Adrenal gland (tissue), 19 donors: ENCODE measurements at regions of chr1 and their contacts with region 1.

Region 1: DNA sequence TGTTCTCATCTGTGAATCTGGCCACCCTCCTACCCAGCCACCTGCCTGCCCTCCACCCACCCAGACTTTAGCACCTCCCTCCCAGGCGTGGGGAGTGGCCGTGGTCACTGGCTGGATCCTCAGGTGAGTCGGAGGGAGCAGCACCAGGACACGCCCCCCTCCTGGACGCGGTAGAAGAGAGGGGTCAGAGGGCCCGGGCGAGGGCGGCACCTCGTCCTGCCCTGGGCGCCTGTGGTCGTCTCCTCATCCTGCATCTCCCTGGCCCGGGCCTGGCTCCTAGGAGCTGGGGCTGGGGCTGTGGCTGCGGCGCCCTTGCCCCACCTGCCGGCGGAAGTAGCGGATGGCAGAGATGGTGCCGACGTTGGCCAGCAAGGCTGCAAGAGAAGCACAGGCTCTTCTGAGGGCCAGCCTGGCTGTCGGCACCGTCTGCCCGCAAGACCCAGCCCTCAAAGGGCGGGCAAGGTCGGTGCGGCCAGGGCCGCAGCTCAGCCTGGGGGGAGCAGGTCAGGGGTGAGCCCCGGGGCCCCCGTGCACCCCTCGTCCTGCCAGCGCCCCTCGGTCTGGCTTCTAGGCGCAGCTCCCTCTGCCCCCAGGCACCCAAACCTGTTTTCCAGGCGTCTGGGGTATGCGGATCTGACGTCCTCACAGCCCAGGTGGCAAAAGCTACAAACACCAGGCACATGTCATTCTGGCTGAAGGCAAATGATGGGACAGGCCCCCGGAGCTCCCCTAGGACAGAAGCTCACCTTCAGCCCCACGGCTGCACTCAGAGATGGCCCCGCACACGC is 5.8 kb downstream of the PERM1 start:
- DNase-seq: peak in 5 of 7 donors; percentile 43 to 82 (median 65)
- H3K4me3 ChIP-seq: no peak overlapping the region
- H3K27ac ChIP-seq: no peak overlapping the region
- H3K4me1 ChIP-seq: no peaks in the 10 kb centered on the region
- H3K27me3 ChIP-seq: peaks cover 51% of the 10 kb centered on the region
- CTCF ChIP-seq: peak; percentile 23 to 72 (median 49)
- POLR2A ChIP-seq: no peak

Region 2: GRCh38 chr1:890661-891060 is 85.4 kb before region 1 on chr1:
- intact Hi-C with region 1: no loop called
- DNase-seq: no peak
- H3K4me3 ChIP-seq: no peak overlapping the region
- H3K27ac ChIP-seq: no peak overlapping the region
- H3K4me1 ChIP-seq: no peaks in the 10 kb centered on the region
- H3K27me3 ChIP-seq: peaks cover 7% of the 10 kb centered on the region
- CTCF ChIP-seq: no peak
- POLR2A ChIP-seq: no peak

Region 3: GRCh38 chr1:904310-904950 is 71.7 kb before region 1 on chr1:
- intact Hi-C with region 1: loop called in 1 of 2 experiments (anchors 10 kb)
- DNase-seq: peak; percentile 57 to 91 (median 75)
- H3K4me3 ChIP-seq: peak overlapping the region in 1 of 4 donors; percentile 38
- H3K27ac ChIP-seq: peak overlapping the region in 1 of 5 donors; percentile 54
- H3K4me1 ChIP-seq: peaks cover 7 to 23% of the 10 kb centered on the region in 2 donors
- H3K27me3 ChIP-seq: peaks cover 11% of the 10 kb centered on the region
- CTCF ChIP-seq: peak; percentile 38 to 96 (median 78)
- POLR2A ChIP-seq: peak in 1 of 2 donors; percentile 24

Region 4: DNA sequence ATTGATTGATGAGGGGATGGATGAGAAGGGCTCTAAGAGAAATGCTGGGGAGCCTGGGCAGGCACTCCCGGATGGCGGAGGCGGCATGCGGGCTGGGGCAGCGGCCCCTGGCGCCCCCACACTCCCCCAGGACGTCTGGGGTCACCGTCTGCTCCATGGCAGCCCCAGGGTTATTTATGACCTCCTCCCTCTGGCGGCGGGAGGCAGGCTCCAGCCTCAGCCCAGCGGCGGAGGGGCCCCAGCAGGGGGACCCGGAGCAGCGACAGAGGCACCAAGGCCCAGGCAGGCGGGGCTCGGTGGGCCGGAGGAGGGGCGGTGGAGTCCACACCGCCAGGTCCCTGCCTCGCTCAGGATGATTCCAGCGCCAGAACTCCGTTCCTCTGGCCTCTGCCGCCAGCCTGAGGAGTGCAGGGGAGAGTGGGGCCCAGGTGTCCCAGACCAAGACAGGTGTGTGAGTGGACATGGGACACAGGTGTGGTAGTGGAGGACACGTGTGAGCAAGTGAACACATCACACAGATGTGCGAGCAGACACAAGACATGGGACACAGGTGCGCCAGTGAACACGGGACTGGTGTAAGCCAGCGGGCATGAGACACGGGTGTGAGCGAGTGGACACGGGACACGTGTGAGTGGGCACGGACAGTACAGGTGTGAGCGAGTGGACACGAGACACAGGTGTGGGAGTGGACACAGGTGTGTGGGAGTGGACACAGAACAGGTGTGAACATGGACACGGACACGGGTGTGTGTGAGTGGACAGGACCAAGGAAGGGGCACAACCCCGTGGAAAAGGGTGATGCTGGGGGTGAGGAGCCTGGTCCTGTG is 54.9 kb before region 1 on chr1:
- intact Hi-C with region 1: no loop called
- DNase-seq: peak in 5 of 7 donors; percentile 53 to 70 (median 62)
- H3K4me3 ChIP-seq: no peak overlapping the region
- H3K27ac ChIP-seq: no peak overlapping the region
- H3K4me1 ChIP-seq: peaks cover 13 to 40% of the 10 kb centered on the region in 2 donors
- H3K27me3 ChIP-seq: peaks cover 63% of the 10 kb centered on the region
- CTCF ChIP-seq: peak; percentile 22 to 61 (median 46)
- POLR2A ChIP-seq: no peak

Region 5: GRCh38 chr1:1144122-1144842 is 168.2 kb after region 1 on chr1:
- intact Hi-C with region 1: no loop called
- DNase-seq: no peak
- H3K4me3 ChIP-seq: no peak overlapping the region
- H3K27ac ChIP-seq: no peak overlapping the region
- H3K4me1 ChIP-seq: no peaks in the 10 kb centered on the region
- H3K27me3 ChIP-seq: no peaks in the 10 kb centered on the region
- CTCF ChIP-seq: no peak
- POLR2A ChIP-seq: no peak